ENCODE measurements at regions of chr16 and their contacts with region 1.

Region 1: DNA sequence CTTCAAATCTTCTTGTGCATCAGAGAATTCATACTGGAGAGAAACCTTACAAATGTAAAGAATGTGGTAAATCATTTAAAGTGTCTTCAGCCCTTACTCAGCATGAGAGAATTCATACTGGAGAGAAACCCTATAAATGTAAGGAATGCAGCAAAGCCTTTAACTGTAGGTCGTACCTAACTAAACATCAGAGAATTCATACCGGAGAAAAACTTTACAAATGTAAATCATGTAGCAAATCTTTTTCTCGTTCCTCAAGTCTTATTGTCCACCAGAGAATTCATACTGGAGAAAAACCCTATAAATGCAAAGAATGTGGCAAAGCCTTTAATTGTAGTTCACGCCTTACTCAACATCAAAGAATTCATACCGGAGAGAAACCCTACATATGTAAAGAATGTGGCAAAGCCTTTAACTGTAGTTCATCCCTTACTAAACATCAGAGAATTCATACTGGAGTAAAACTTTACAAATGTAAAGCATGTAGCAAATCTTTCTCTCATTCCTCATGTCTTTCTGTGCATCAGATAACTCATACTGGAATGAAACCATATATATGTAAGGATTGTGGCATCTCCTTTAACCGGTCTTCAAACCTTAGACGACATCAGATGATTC is 118.5 kb upstream of the ZNF267 start:
- DNase-seq: no peak
- ATAC-seq: no peak
- H3K4me3 Mint-ChIP-seq: no peak overlapping the region
- H3K27ac Mint-ChIP-seq: no peak overlapping the region
- H3K4me1 Mint-ChIP-seq: no peaks in the 10 kb centered on the region
- H3K27me3 Mint-ChIP-seq: no peaks in the 10 kb centered on the region
- CTCF ChIP-seq: no peak

Region 2: DNA sequence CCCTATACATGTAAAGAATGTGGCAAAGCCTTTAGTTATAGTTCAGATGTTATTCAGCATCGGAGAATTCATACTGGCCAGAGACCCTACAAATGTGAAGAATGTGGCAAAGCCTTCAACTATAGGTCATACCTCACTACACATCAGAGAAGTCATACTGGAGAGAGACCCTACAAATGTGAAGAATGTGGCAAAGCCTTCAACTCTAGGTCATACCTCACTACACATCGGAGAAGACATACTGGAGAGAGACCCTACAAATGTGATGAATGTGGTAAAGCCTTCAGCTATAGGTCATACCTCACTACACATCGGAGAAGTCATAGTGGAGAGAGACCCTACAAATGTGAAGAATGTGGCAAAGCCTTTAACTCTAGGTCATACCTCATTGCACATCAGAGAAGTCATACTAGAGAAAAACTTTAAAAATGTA is 161.0 kb after region 1 on chr16:
- CTCF ChIA-PET with region 1: no interaction called
- POLR2A ChIA-PET with region 1: no interaction called
- intact Hi-C with region 1: loop called (anchors 10 kb)
- DNase-seq: no peak
- ATAC-seq: no peak
- H3K4me3 Mint-ChIP-seq: no peak overlapping the region
- H3K27ac Mint-ChIP-seq: no peak overlapping the region
- H3K4me1 Mint-ChIP-seq: peaks cover 3% of the 10 kb centered on the region
- H3K27me3 Mint-ChIP-seq: no peaks in the 10 kb centered on the region
- CTCF ChIP-seq: no peak